Naive thymus-derived CD4-positive, alpha-beta T cell (primary cell): ENCODE measurements at regions of chr2 and their contacts with region 1.

Region 1: GRCh38 chr2:68157402-68158133 is at the start of gene PNO1:
- DNase-seq: peak; percentile 95 to 100 (median 98)
- ATAC-seq: peak; percentile 98
- H3K4me3 ChIP-seq: peak within 1 kb of the TSS; percentile 93
- H3K4me3 Mint-ChIP-seq: peak within 1 kb of the TSS; percentile 84 to 99 (median 94)
- H3K27ac ChIP-seq: peak within 1 kb of the TSS; percentile 87
- H3K27ac Mint-ChIP-seq: peak within 1 kb of the TSS; percentile 96 to 100 (median 99)
- H3K4me1 ChIP-seq: peaks cover 19 to 38% of the 10 kb centered on the region in 2 donors
- H3K4me1 Mint-ChIP-seq: peaks cover 30 to 72% (median 58%) of the 10 kb centered on the region in 7 donors
- H3K27me3 ChIP-seq: no peaks in the 10 kb centered on the region
- H3K27me3 Mint-ChIP-seq: no peaks in the 10 kb centered on the region
- total RNA-seq, gene PNO1: 11.0 to 31.0 (median 12.8) TPM

Region 2: DNA sequence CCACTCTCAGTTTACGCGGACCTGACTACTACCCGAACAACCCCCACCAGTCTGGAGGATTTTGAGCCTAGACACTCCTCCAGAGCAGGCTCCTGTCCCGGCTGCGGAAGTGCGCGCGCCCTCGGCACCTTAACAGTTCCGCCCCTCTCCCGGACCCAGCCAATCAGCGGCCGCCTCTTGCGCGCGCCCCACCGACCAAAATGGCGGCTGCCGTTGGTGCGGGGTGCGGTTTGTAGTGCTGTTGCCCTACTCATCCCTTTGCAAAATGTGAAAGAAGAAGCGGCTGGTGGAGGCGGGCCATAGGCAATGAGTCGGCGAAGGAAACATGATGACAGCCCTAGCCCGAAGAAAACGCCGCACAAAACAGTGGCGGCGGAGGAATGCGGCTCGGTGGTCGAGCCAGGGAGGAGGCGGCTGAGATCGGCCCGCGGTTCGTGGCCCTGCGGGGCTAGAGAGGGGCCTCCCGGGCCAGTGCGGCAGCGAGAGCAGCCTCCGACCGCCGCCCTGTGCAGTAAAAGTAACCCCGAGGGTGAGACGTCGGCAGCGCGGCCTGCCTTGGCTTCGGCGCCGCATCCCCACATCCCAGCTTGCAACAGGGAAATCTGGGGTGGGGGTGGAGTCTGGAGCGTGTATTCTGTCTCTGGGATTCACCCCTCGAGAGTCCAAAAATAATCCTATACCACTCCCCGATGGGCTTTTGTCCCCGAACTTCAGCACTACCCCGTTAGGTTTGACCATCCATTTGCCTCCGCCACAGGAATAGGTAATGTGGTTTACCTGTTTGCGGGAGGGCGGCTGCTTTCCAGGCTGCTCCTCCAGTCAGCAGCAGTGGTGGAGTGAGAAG is 760.2 kb before region 1 on chr2 and contains the start of gene ETAA1:
- CTCF ChIA-PET with region 1: no interaction called
- POLR2A ChIA-PET with region 1: no interaction called
- intact Hi-C with region 1: loop called in 1 of 2 experiments (anchors 5 kb)
- DNase-seq: peak; percentile 90 to 94 (median 92)
- ATAC-seq: peak; percentile 99
- H3K4me3 ChIP-seq: peak within 1 kb of the TSS; percentile 98
- H3K4me3 Mint-ChIP-seq: peak within 1 kb of the TSS; percentile 92 to 99 (median 97)
- H3K27ac ChIP-seq: peak within 1 kb of the TSS; percentile 87
- H3K27ac Mint-ChIP-seq: peak within 1 kb of the TSS; percentile 97 to 99 (median 98)
- H3K4me1 ChIP-seq: no peaks in the 10 kb centered on the region
- H3K4me1 Mint-ChIP-seq: peaks cover 9 to 26% (median 18%) of the 10 kb centered on the region in 7 donors
- H3K27me3 ChIP-seq: no peaks in the 10 kb centered on the region
- H3K27me3 Mint-ChIP-seq: no peaks in the 10 kb centered on the region
- total RNA-seq, gene ETAA1: 6.6 to 16.4 (median 10.0) TPM

Region 3: GRCh38 chr2:68062680-68063387 is 94.7 kb before region 1 on chr2 and contains the start of gene C1D:
- CTCF ChIA-PET with region 1: no interaction called
- POLR2A ChIA-PET with region 1: interaction called, 9 read pairs
- intact Hi-C with region 1: loop called (anchors 1 kb)
- DNase-seq: peak; percentile 87 to 93 (median 91)
- ATAC-seq: peak; percentile 99
- H3K4me3 ChIP-seq: peak within 1 kb of the TSS; percentile 94
- H3K4me3 Mint-ChIP-seq: peak within 1 kb of the TSS; percentile 84 to 98 (median 96)
- H3K27ac ChIP-seq: peak within 1 kb of the TSS; percentile 97
- H3K27ac Mint-ChIP-seq: peak within 1 kb of the TSS; percentile 94 to 99 (median 98)
- H3K4me1 ChIP-seq: peaks cover 11 to 12% of the 10 kb centered on the region in 2 donors
- H3K4me1 Mint-ChIP-seq: peaks cover 16 to 53% (median 44%) of the 10 kb centered on the region in 7 donors
- H3K27me3 ChIP-seq: no peaks in the 10 kb centered on the region
- H3K27me3 Mint-ChIP-seq: peaks cover 0 to 24% (median 5%) of the 10 kb centered on the region in 5 donors
- total RNA-seq, gene C1D: 13.2 to 24.4 (median 15.7) TPM

Region 4: GRCh38 chr2:68196120-68196716 is 38.6 kb after region 1 on chr2:
- CTCF ChIA-PET with region 1: interaction called, 4 read pairs
- POLR2A ChIA-PET with region 1: interaction called, 3 read pairs
- intact Hi-C with region 1: loop called in 1 of 2 experiments (anchors 2 kb)
- DNase-seq: peak in 6 of 9 donors; percentile 21 to 65 (median 57)
- ATAC-seq: peak; percentile 74
- H3K4me3 ChIP-seq: no peak overlapping the region
- H3K4me3 Mint-ChIP-seq: no peak overlapping the region
- H3K27ac ChIP-seq: no peak overlapping the region
- H3K27ac Mint-ChIP-seq: peak overlapping the region in 5 of 9 donors; percentile 6 to 81 (median 72)
- H3K4me1 ChIP-seq: no peaks in the 10 kb centered on the region
- H3K4me1 Mint-ChIP-seq: peaks cover 35 to 92% (median 71%) of the 10 kb centered on the region in 7 donors
- H3K27me3 ChIP-seq: no peaks in the 10 kb centered on the region
- H3K27me3 Mint-ChIP-seq: no peaks in the 10 kb centered on the region

Region 5: DNA sequence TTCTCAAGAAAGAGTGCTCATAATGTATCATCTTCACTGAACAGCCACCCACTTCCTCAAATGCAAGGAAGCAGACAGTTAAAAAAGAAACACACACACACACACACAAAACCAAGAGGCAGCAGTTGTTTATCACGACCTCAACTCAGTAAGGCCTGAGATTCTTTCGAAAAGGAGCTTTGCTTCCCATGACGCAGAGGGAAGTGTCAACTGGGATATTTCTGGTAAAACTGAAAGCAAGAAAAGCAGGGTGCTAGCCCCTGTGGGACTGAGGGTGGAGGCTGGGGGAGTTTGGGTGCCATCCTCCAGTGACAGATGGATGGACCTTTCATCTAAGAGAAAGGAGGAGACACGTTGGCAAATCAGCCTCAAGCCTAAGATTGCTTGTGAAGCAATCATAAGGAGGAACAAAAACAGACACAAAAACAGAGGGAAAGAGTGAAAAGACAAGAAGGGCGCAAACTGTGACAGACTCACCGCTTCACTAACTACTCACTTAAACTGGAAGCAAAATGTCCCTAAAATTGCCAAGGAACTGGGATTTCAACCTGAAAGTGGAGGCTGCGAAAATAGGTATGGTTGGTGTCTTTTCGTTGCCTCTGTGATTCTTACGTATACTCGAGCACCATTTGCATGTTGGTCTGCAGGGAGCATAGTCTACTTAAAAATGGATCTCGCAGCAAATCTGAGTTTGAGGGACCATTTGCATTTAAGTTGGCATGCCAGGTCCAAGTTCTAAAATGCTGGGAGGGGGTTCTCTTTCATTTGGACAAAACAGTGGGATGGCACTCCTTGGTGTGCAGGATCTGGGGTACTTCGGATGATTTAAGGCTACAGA is 577.3 kb after region 1 on chr2 and contains the start of gene ARHGAP25:
- CTCF ChIA-PET with region 1: no interaction called
- POLR2A ChIA-PET with region 1: no interaction called
- intact Hi-C with region 1: loop called in 1 of 2 experiments (anchors 10 kb)
- DNase-seq: peak; percentile 20 to 81 (median 69)
- ATAC-seq: peak; percentile 78
- H3K4me3 ChIP-seq: peak within 1 kb of the TSS; percentile 77
- H3K4me3 Mint-ChIP-seq: no peak within 1 kb of the TSS
- H3K27ac ChIP-seq: peak within 1 kb of the TSS; percentile 78
- H3K27ac Mint-ChIP-seq: no peak within 1 kb of the TSS
- H3K4me1 ChIP-seq: peaks cover 38 to 48% of the 10 kb centered on the region in 2 donors
- H3K4me1 Mint-ChIP-seq: peaks cover 23 to 37% (median 32%) of the 10 kb centered on the region in 7 donors
- H3K27me3 ChIP-seq: no peaks in the 10 kb centered on the region
- H3K27me3 Mint-ChIP-seq: no peaks in the 10 kb centered on the region
- total RNA-seq, gene ARHGAP25: 68.2 to 139 (median 116) TPM